ENCODE measurements at regions of chr9 and their contacts with region 1.

Region 1: GRCh38 chr9:130715270-130716077 is 21.9 kb downstream of the EXOSC2 start:
- DNase-seq: no peak
- H3K4me3 ChIP-seq: peak overlapping the region; percentile 92 to 98 (median 95)
- H3K27ac ChIP-seq: peak overlapping the region; percentile 97 to 98 (median 98)
- H3K4me1 ChIP-seq: peaks cover 26 to 61% (median 50%) of the 10 kb centered on the region in 4 donors
- H3K27me3 ChIP-seq: no peaks in the 10 kb centered on the region
- CTCF ChIP-seq: no peak
- EP300 ChIP-seq: no peak
- POLR2A ChIP-seq: no peak

Region 2: DNA sequence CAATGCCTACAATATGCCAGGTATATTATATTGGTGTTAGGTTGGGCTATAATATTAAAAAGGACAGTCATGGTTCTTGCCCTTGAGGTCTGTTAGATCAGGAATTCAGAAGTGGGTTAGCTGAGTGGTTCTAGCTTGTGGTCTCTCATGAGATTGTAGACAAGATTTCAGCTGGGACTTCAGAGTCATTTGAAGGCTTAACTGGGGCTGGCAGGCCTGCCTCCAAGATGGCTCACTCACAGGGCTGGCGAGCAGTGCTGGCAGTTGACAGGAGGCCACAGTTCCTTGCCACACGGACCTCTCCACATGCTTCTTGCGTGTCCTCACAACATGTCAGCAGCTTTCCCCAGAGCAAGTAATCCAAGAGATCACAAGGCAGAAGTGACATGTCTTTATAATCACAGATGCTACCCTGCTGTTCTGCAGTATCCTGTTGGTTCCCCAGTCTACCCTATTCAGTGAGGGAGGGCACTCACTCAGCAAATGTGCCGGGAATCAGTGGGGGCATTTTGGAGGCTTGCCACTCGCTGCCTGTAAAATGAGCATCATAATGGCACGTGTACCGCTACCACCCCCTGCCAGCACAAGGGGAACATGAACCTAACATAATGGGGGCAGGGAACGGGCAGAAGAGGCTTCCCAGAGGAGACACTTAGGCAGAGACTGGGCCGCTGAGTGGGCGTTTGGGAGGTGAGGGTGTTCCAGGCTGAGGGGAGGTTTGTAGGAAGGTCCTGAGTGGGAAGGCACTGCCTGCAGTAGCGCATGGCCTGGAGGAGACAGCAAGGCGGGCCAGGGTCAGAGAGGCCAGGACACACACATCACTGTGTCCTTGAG is 48.1 kb after region 1 on chr9:
- intact Hi-C with region 1: loop called (anchors 5 kb)
- DNase-seq: no peak
- H3K4me3 ChIP-seq: no peak overlapping the region
- H3K27ac ChIP-seq: no peak overlapping the region
- H3K4me1 ChIP-seq: peaks cover 20 to 52% (median 40%) of the 10 kb centered on the region in 4 donors
- H3K27me3 ChIP-seq: no peaks in the 10 kb centered on the region
- CTCF ChIP-seq: no peak
- EP300 ChIP-seq: no peak
- POLR2A ChIP-seq: no peak

Measured in esophagus muscularis mucosa (tissue), 4 donors.